IMR-90 (cell line): ENCODE measurements at regions of chr3 and their contacts with region 1.

Region 1: GRCh38 chr3:86937305-86937791 is 53.6 kb downstream of the VGLL3 start:
- DNase-seq: peak; percentile 92
- ATAC-seq: peak; percentile 76
- H3K4me3 ChIP-seq: no peak overlapping the region
- H3K27ac ChIP-seq: peak overlapping the region; percentile 99
- H3K4me1 ChIP-seq: peaks cover 7% of the 10 kb centered on the region
- H3K27me3 ChIP-seq: no peaks in the 10 kb centered on the region
- CTCF ChIP-seq: no peak
- POLR2A ChIP-seq: peak; percentile 33; the same call in 1 of the 2 replicates
- RAD21 ChIP-seq: no peak

Region 2: GRCh38 chr3:86793786-86794185 is 143.6 kb before region 1 on chr3:
- CTCF ChIA-PET with region 1: no interaction called
- POLR2A ChIA-PET with region 1: no interaction called
- dilution Hi-C with region 1: no loop called
- in situ Hi-C with region 1: loop called (anchors 10 kb)
- intact Hi-C with region 1: loop called (anchors 1 kb)
- DNase-seq: peak; percentile 97
- ATAC-seq: peak; percentile 95
- H3K4me3 ChIP-seq: no peak overlapping the region
- H3K27ac ChIP-seq: peak overlapping the region; percentile 85; the same call in 1 of the 2 replicates
- H3K4me1 ChIP-seq: peaks cover 5% of the 10 kb centered on the region; the same call in 1 of the 2 replicates
- H3K27me3 ChIP-seq: no peaks in the 10 kb centered on the region
- CTCF ChIP-seq: no peak
- POLR2A ChIP-seq: peak; percentile 69
- RAD21 ChIP-seq: no peak

Region 3: DNA sequence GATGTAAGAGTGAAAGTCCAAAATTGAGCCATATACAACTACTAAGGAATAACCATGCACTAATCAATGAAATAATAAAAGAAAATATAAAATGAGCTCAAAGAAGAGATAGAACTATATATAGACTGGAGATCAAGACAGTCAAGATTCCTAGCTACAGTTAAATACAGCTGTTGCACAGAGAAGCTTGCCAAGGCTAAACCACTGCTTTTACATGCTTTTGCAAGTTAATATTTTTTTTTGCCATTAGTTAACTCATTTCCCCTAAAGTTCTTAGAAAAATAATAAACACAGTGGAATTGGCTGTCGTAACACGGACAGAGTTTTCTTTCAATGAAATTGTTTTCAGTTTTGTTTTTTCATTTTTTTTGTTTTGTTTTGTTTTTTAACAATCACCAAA is 69.4 kb before region 1 on chr3:
- CTCF ChIA-PET with region 1: no interaction called
- POLR2A ChIA-PET with region 1: no interaction called
- dilution Hi-C with region 1: no loop called
- in situ Hi-C with region 1: no loop called
- intact Hi-C with region 1: loop called (anchors 5 kb)
- DNase-seq: peak; percentile 77
- ATAC-seq: peak; percentile 61
- H3K4me3 ChIP-seq: no peak overlapping the region
- H3K27ac ChIP-seq: no peak overlapping the region
- H3K4me1 ChIP-seq: no peaks in the 10 kb centered on the region
- H3K27me3 ChIP-seq: no peaks in the 10 kb centered on the region
- CTCF ChIP-seq: no peak
- POLR2A ChIP-seq: no peak
- RAD21 ChIP-seq: no peak

Region 4: GRCh38 chr3:86982883-86983282 is 45.5 kb after region 1 on chr3:
- CTCF ChIA-PET with region 1: no interaction called
- POLR2A ChIA-PET with region 1: interaction called, 3 read pairs
- dilution Hi-C with region 1: no loop called
- in situ Hi-C with region 1: no loop called
- intact Hi-C with region 1: loop called (anchors 1 kb)
- DNase-seq: peak; percentile 68
- ATAC-seq: peak; percentile 42
- H3K4me3 ChIP-seq: no peak overlapping the region
- H3K27ac ChIP-seq: peak overlapping the region; percentile 45; the same call in 1 of the 2 replicates
- H3K4me1 ChIP-seq: peaks cover 15% of the 10 kb centered on the region
- H3K27me3 ChIP-seq: no peaks in the 10 kb centered on the region
- CTCF ChIP-seq: no peak
- POLR2A ChIP-seq: no peak
- RAD21 ChIP-seq: no peak

Region 5: GRCh38 chr3:86990734-86991481 is 53.6 kb after region 1 on chr3 and contains the start of gene VGLL3:
- CTCF ChIA-PET with region 1: no interaction called
- POLR2A ChIA-PET with region 1: interaction called, 3 read pairs
- dilution Hi-C with region 1: no loop called
- in situ Hi-C with region 1: no loop called
- intact Hi-C with region 1: loop called (anchors 2 kb)
- DNase-seq: peak; percentile 87
- ATAC-seq: peak; percentile 85
- H3K4me3 ChIP-seq: peak within 1 kb of the TSS; percentile 99
- H3K27ac ChIP-seq: peak within 1 kb of the TSS; percentile 97
- H3K4me1 ChIP-seq: peaks cover 6% of the 10 kb centered on the region
- H3K27me3 ChIP-seq: no peaks in the 10 kb centered on the region
- CTCF ChIP-seq: peak; percentile 25
- POLR2A ChIP-seq: peak; percentile 92
- RAD21 ChIP-seq: no peak
- total RNA-seq, gene VGLL3: 96.7 and 97.3 TPM in 2 replicates